ENCODE measurements at regions of chr10 and their contacts with region 1.

Region 1: DNA sequence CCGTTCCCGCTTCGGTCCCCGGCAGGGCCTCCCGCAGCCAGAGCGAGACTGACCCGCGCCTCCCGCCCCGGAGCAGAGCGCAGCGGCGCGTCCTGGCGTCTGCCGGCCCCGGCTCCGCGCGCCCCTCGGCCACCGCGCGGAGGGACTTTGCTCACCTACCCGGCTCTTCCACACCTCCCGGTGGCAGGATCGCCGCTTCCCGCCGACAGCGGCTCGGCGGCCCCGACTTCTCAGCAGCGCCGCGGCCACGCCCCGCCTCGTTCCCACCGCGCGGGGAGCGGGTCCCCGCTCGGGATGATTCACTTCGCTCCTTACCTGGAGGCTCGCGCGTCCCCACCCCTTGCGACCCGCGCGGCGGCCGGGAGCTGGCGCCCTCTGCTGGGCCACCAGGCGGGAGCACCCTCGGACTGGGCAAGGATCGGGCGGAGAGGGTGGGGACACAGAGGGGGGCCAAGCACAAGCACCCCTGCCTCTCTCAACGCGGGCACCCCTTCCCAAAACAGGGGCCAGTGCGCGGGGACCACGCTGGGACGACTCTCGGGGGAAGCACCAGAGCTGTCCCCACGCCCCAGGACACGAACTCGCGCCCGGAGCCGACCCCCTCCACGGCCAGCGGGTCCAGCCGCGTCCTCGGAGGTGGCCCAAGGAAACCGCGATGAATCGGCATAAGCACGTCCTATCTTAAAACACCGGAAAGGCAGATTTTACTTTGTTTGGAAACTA is 101.0 kb upstream of the SVIL start:
- DNase-seq: peak; percentile 90
- H3K4me3 Mint-ChIP-seq: peak overlapping the region; percentile 73
- H3K27ac Mint-ChIP-seq: peak overlapping the region; percentile 59
- H3K4me1 Mint-ChIP-seq: peaks cover 27% of the 10 kb centered on the region
- H3K27me3 Mint-ChIP-seq: peaks cover 7% of the 10 kb centered on the region

Region 2: GRCh38 chr10:29517352-29517923 is 218.3 kb before region 1 on chr10:
- CTCF ChIA-PET with region 1: interaction called, 6 read pairs
- POLR2A ChIA-PET with region 1: no interaction called
- intact Hi-C with region 1: loop called (anchors 10 kb)
- DNase-seq: no peak
- H3K4me3 Mint-ChIP-seq: no peak overlapping the region
- H3K27ac Mint-ChIP-seq: no peak overlapping the region
- H3K4me1 Mint-ChIP-seq: no peaks in the 10 kb centered on the region
- H3K27me3 Mint-ChIP-seq: no peaks in the 10 kb centered on the region

Region 3: DNA sequence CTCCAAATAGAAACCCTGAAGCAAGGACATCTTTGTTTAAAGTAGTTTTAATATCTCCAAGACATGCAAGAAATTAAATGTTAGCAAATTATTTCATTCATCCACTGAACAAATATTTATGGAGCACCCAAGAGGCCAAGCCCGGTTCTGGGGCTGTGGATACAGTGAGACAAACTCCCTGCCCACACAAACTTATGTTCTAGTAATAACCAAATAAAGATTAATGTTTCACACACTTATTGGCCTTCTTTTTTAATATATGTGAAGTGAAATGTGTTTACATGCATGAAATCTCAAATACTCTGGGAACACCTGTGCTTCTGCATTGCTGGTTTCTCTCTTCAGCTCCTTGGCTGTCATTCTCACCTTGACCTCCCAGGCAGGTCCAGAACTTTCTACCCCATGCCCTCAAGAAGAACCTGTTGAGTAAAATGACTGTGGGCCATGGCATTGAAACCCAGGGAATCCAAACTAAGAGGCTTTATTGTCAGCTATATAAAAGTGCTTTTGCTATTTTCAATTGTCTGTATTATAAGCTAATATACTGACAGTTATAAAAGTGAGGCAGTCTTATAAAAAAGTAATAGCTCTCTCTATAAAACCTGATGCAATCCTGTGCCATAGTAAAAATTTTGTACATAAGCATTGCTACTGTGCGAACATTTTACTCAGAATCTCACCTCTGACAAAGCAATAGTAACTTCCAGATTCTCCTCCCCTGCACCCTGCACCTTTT is 144.7 kb before region 1 on chr10:
- CTCF ChIA-PET with region 1: interaction called, 9 read pairs
- POLR2A ChIA-PET with region 1: no interaction called
- intact Hi-C with region 1: loop called (anchors 2 kb)
- DNase-seq: no peak
- H3K4me3 Mint-ChIP-seq: no peak overlapping the region
- H3K27ac Mint-ChIP-seq: peak overlapping the region; percentile 66
- H3K4me1 Mint-ChIP-seq: peaks cover 9% of the 10 kb centered on the region
- H3K27me3 Mint-ChIP-seq: no peaks in the 10 kb centered on the region

Region 4: DNA sequence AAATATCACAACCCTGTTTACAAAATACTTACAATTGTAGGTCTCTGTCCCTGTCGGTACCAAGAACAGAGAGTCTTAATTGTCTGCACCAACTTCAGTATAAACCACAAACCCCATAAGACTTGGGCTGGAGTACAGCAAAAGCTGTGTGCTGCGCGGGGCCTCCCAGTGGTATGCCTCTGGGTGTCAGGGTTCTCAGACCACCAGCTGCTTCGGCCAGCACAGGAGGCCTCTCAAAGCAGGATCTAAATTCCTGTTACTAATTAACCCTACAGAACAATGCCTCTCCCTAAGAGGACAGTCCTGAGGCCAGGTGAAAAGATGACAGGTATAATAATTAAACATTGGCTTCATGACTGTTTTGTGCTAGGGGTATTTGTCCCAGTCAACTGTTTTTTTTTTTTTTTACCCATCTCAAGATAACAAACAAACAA is 100.0 kb before region 1 on chr10:
- CTCF ChIA-PET with region 1: interaction called, 3 read pairs
- POLR2A ChIA-PET with region 1: no interaction called
- intact Hi-C with region 1: loop called (anchors 1 kb)
- DNase-seq: no peak
- H3K4me3 Mint-ChIP-seq: no peak overlapping the region
- H3K27ac Mint-ChIP-seq: peak overlapping the region; percentile 42
- H3K4me1 Mint-ChIP-seq: peaks cover 39% of the 10 kb centered on the region
- H3K27me3 Mint-ChIP-seq: no peaks in the 10 kb centered on the region

Region 5: DNA sequence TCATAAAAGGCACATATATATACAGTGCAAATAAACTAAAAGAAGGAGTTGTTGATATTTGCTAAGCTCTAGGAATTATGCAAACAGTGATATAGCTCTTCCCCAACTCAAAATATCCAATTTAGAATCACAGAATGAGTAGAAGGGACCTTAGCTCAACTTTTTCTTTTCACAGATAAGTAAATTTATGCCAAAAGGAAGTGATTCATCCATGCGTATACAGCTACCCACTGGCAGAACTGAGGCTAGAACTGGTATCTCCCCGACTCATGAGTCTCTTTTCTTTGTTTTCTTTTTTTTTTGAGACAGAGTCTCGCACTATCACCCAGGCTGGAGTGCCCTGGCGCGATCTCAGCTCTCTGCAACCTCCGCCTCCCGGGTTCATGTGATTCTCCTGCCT is 46.8 kb before region 1 on chr10:
- CTCF ChIA-PET with region 1: interaction called, 3 read pairs
- POLR2A ChIA-PET with region 1: no interaction called
- intact Hi-C with region 1: loop called (anchors 2 kb)
- DNase-seq: peak; percentile 35
- H3K4me3 Mint-ChIP-seq: peak overlapping the region; percentile 16
- H3K27ac Mint-ChIP-seq: no peak overlapping the region
- H3K4me1 Mint-ChIP-seq: peaks cover 33% of the 10 kb centered on the region
- H3K27me3 Mint-ChIP-seq: no peaks in the 10 kb centered on the region